Activated CD4-positive, alpha-beta T cell treated with anti-CD3 and anti-CD28 coated beads for 36 hours (primary cell): ENCODE measurements at regions of chr11 and their contacts with region 1.

Region 1: GRCh38 chr11:6389921-6390724 is at the start of gene SMPD1:
- DNase-seq: peak; percentile 97
- ATAC-seq: peak; percentile 90
- H3K4me3 Mint-ChIP-seq: peak within 1 kb of the TSS; percentile 77
- H3K27ac Mint-ChIP-seq: peak within 1 kb of the TSS; percentile 93
- H3K4me1 Mint-ChIP-seq: peaks cover 55% of the 10 kb centered on the region
- H3K27me3 Mint-ChIP-seq: no peaks in the 10 kb centered on the region
- total RNA-seq, gene SMPD1: 13.1 to 14.1 TPM

Region 2: GRCh38 chr11:6228520-6228919 is 161.6 kb before region 1 on chr11:
- CTCF ChIA-PET with region 1: no interaction called
- POLR2A ChIA-PET with region 1: no interaction called
- intact Hi-C with region 1: no loop called
- DNase-seq: no peak
- ATAC-seq: no peak
- H3K4me3 Mint-ChIP-seq: no peak overlapping the region
- H3K27ac Mint-ChIP-seq: no peak overlapping the region
- H3K4me1 Mint-ChIP-seq: peaks cover 49% of the 10 kb centered on the region
- H3K27me3 Mint-ChIP-seq: no peaks in the 10 kb centered on the region

Region 3: DNA sequence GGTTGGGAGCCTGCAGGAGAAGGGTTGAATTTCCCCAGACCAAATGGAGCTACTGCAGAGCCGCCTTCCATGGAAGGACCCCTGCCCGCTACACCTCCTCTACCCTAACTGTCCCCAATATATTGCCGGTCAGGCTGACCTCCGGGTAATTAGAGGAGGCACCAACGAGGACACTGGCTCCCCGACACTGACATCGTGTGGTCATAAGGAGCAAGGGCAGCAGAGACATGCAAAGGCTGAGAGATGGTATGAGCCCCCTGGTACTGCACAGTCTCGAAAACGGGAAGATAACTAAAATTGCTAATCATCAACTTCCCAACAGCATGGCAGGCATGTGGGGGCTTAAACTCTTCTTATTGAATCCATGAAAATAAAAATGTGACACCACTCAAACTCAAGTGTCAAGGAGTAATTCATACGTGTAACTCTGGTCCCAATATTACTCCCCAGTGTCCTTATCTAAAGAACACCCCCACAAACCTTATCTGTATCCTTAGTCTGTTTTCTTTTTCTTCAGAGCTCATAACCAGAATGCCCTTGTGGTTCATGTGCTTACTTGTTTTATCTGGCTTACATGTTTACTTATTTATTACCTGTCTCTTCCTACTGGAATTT is 74.2 kb before region 1 on chr11:
- CTCF ChIA-PET with region 1: no interaction called
- POLR2A ChIA-PET with region 1: interaction called, 3 read pairs
- intact Hi-C with region 1: loop called in 1 of 2 experiments (anchors 1 kb)
- DNase-seq: peak; percentile 59
- ATAC-seq: peak; percentile 33
- H3K4me3 Mint-ChIP-seq: no peak overlapping the region
- H3K27ac Mint-ChIP-seq: no peak overlapping the region
- H3K4me1 Mint-ChIP-seq: peaks cover 12% of the 10 kb centered on the region
- H3K27me3 Mint-ChIP-seq: peaks cover 42% of the 10 kb centered on the region

Region 4: DNA sequence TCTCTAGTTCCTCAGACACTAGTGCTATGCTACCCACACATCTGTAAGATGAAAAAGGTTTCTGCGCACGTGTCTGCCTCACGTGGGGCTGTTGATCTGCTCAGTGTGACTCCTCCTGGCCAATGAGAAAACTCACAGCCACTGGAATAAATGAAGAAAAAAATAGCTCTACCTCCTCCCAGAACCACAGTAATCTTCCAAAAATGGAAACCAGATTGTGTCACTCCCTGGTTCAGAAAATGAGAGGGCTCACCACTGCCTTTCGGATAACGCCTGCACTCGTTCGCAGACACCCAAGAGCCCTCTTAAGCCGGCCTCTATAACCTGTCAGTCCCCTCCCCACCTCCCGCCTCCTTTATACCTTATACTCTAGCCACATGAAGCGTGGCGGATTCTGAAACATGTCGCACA is 23.7 kb after region 1 on chr11:
- CTCF ChIA-PET with region 1: interaction called, 5 read pairs
- POLR2A ChIA-PET with region 1: interaction called, 12 read pairs
- intact Hi-C with region 1: loop called (anchors 1 kb)
- DNase-seq: peak; percentile 88
- ATAC-seq: peak; percentile 86
- H3K4me3 Mint-ChIP-seq: no peak overlapping the region
- H3K27ac Mint-ChIP-seq: no peak overlapping the region
- H3K4me1 Mint-ChIP-seq: peaks cover 30% of the 10 kb centered on the region
- H3K27me3 Mint-ChIP-seq: no peaks in the 10 kb centered on the region

Region 5: GRCh38 chr11:6443269-6444003 is 53.3 kb after region 1 on chr11:
- CTCF ChIA-PET with region 1: interaction called, 24 read pairs
- POLR2A ChIA-PET with region 1: no interaction called
- intact Hi-C with region 1: no loop called
- DNase-seq: peak; percentile 74
- ATAC-seq: peak; percentile 86
- H3K4me3 Mint-ChIP-seq: no peak overlapping the region
- H3K27ac Mint-ChIP-seq: no peak overlapping the region
- H3K4me1 Mint-ChIP-seq: no peaks in the 10 kb centered on the region
- H3K27me3 Mint-ChIP-seq: no peaks in the 10 kb centered on the region

Region 6: GRCh38 chr11:6481012-6481923 is 91.1 kb after region 1 on chr11 and contains the starts of genes ARFIP2 and TIMM10B:
- CTCF ChIA-PET with region 1: interaction called, 4 read pairs
- POLR2A ChIA-PET with region 1: interaction called, 7 read pairs
- intact Hi-C with region 1: loop called (anchors 1 kb)
- DNase-seq: peak; percentile 99
- ATAC-seq: peak; percentile 98
- H3K4me3 Mint-ChIP-seq: peak within 1 kb of the TSS; percentile 80
- H3K27ac Mint-ChIP-seq: peak within 1 kb of the TSS; percentile 92
- H3K4me1 Mint-ChIP-seq: peaks cover 30% of the 10 kb centered on the region
- H3K27me3 Mint-ChIP-seq: no peaks in the 10 kb centered on the region
- total RNA-seq, gene ARFIP2: 36.7 to 40.3 TPM
- total RNA-seq, gene TIMM10B: 27.1 to 39.2 TPM

Region 7: DNA sequence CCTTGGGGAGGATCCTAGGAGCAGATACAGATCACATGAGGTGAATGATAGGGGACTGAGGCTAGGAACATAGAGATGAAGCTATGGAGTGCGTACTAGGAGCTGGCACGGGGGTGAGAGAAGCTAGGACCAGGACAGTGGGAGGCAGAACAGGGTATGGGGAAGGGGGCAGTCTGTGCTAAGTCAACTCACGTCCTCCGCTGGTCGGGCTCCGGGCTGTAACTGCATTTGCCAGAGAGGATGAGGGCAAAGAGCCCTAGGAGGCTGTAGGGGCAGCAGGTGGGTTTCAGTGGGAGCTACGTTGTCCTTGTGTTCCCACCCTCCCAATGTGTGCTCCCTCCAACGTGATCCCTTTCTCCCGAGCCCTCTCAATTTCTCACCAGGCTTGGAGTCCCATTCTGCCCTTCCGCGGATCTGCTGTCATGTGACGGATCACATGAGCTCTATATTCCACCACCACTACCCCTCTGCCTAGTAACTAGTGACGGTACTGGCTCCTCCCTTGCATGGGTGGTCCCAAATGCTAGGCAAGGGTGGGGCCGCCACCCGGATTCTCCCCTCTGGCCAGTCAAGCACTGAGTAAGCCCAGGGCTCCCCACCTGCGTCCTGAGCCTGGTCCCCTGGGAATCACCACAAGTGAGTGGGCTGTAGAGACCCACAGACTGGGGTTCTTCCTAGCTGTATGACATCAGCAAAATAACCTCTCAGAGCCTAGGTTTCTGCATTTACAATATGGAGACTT is 229.1 kb after region 1 on chr11 and contains the start of gene TPP1:
- CTCF ChIA-PET with region 1: no interaction called
- POLR2A ChIA-PET with region 1: no interaction called
- intact Hi-C with region 1: loop called (anchors 1 kb)
- DNase-seq: peak; percentile 91
- ATAC-seq: peak; percentile 93
- H3K4me3 Mint-ChIP-seq: no peak within 1 kb of the TSS
- H3K27ac Mint-ChIP-seq: no peak within 1 kb of the TSS
- H3K4me1 Mint-ChIP-seq: peaks cover 8% of the 10 kb centered on the region
- H3K27me3 Mint-ChIP-seq: no peaks in the 10 kb centered on the region
- total RNA-seq, gene TPP1: 38.1 to 47.9 TPM

Region 8: GRCh38 chr11:6746086-6746618 is 356.0 kb after region 1 on chr11:
- CTCF ChIA-PET with region 1: interaction called, 3 read pairs
- POLR2A ChIA-PET with region 1: no interaction called
- intact Hi-C with region 1: loop called in 1 of 2 experiments (anchors 5 kb)
- DNase-seq: peak; percentile 58
- ATAC-seq: peak; percentile 85
- H3K4me3 Mint-ChIP-seq: no peak overlapping the region
- H3K27ac Mint-ChIP-seq: no peak overlapping the region
- H3K4me1 Mint-ChIP-seq: peaks cover 30% of the 10 kb centered on the region
- H3K27me3 Mint-ChIP-seq: no peaks in the 10 kb centered on the region